MCF 10A (cell line): ENCODE measurements at regions of chr17 and their contacts with region 1.

Region 1: DNA sequence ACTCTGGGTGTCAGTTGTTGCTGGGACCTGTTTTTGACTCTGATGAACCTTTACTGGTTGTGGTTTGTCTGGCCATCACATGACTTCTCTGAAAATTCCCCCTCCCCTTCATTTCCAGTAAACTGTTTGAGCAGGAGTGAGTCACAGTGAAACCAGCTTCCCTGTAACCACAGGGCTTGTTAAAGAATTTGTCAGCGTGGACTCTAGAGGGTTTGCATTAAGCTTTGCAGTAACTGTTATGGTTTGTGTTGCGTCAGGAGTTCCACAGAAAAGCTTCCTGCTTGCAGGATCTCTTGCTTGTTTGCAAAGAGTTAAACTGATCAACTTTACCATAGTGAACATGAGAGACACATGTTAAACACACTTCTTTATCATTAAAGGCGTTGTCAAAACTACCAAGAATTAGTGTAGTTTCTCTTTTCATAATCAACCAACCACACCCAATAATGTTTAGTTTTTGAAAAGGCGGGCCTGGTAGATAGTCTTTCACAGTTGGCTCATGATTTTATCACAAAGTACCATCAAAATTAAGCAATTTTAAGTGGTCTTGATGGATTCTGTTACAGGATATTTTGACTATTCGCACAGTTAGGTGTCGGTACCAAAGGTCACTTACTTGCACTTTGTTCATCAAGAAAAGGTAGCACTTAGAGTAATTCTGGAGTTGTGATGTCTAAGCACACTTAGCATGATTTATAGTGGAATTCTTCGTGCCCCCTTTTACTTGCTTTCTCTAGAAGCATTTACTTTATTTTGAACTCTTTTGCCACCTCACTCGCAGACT is 79.3 kb downstream of the VMP1 start:
- DNase-seq: peak; percentile 99
- H3K4me3 Mint-ChIP-seq: peak overlapping the region; percentile 64
- H3K27ac Mint-ChIP-seq: peak overlapping the region; percentile 93
- H3K4me1 Mint-ChIP-seq: peaks cover 28% of the 10 kb centered on the region
- H3K27me3 Mint-ChIP-seq: no peaks in the 10 kb centered on the region
- CTCF ChIP-seq: no peak

Region 2: DNA sequence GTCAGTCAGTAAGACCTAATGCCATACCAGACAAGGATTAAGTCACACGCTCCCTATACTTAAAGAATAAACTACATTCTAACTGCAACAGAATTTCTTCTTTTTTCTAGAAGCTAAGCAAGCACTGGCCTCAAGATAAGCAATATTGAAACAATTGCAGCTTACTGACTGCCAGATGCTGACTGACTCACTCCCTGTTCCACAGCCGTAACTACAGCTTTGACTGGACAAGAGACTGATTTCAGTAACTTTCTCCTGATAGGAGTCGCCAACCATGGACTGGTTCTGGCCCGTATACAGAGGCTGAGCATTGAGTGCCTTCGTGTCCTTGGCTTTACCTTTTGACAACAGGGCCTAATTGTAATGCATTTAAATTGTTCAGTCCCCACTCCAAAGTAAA is 748.0 kb before region 1 on chr17:
- CTCF ChIA-PET with region 1: no interaction called
- POLR2A ChIA-PET with region 1: no interaction called
- intact Hi-C with region 1: no loop called
- DNase-seq: no peak
- H3K4me3 Mint-ChIP-seq: no peak overlapping the region
- H3K27ac Mint-ChIP-seq: no peak overlapping the region
- H3K4me1 Mint-ChIP-seq: no peaks in the 10 kb centered on the region
- H3K27me3 Mint-ChIP-seq: no peaks in the 10 kb centered on the region
- CTCF ChIP-seq: no peak

Region 3: DNA sequence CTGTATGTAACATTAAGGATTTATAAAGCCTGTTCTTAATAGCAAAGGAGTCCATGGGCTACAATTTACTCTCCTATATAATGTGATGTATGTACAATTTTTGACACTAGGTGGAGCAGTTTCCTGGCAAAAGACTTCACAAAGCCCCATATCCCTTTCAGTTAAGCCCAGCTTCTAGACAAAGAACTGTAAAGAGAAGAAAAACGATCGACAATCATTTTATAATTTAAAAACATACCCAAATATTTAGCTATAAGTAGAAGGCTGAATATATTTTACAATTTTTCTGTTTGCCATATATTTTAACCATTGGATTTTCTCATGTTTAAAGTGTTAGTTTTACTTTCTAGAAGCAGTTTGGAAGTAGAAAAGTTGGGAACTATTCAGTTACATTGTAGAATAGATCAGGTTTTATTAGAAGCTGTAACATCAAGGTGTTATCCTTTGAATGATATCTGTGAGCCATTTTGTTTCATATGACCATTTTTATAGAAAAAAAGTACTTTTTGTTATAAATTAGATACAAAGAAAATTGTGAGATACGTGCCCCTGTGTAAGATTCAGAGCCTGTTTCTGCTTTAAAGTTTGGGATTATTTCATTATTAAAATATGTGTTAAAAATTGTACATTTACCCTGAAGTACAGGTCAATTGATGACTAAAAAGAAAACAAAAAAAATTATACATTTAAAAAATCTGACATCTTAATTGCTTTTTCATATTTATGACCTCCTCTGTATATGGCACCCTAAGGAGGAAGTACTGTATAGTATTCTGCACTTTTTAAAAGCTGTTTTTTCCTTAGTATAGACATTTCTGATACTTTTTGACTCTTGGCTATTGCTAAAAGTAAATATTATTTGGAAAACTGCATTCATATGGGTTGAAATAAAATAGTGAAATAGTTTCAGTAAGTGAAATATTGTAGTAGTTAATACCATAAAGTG is 32.9 kb before region 1 on chr17:
- CTCF ChIA-PET with region 1: interaction called, 23 read pairs
- POLR2A ChIA-PET with region 1: interaction called, 150 read pairs
- intact Hi-C with region 1: loop called (anchors 1 kb)
- DNase-seq: peak; percentile 86
- H3K4me3 Mint-ChIP-seq: peak overlapping the region; percentile 56
- H3K27ac Mint-ChIP-seq: peak overlapping the region; percentile 83
- H3K4me1 Mint-ChIP-seq: peaks cover 23% of the 10 kb centered on the region
- H3K27me3 Mint-ChIP-seq: no peaks in the 10 kb centered on the region
- CTCF ChIP-seq: peak; percentile 62

Region 4: DNA sequence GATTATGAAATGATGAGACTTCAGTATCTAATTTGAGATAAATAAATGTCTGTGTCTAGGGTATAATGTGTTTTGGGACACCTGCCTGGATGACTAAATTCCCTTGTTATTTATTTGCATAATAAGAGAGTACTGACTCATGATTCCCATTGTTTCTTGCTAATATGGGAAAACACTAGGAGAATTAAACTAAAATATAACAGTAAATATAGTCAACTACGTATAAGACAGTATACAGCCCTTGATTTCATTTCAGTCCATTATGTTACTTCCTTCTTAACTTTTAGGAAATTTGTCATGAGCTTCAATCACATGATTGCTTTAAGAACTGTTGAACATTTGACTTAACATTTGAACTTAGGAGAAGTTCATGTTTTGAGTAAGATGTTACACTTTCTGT is 16.8 kb before region 1 on chr17:
- CTCF ChIA-PET with region 1: interaction called, 3 read pairs
- POLR2A ChIA-PET with region 1: interaction called, 150 read pairs
- intact Hi-C with region 1: no loop called
- DNase-seq: peak; percentile 61
- H3K4me3 Mint-ChIP-seq: no peak overlapping the region
- H3K27ac Mint-ChIP-seq: peak overlapping the region; percentile 75
- H3K4me1 Mint-ChIP-seq: no peaks in the 10 kb centered on the region
- H3K27me3 Mint-ChIP-seq: no peaks in the 10 kb centered on the region
- CTCF ChIP-seq: no peak

Region 5: DNA sequence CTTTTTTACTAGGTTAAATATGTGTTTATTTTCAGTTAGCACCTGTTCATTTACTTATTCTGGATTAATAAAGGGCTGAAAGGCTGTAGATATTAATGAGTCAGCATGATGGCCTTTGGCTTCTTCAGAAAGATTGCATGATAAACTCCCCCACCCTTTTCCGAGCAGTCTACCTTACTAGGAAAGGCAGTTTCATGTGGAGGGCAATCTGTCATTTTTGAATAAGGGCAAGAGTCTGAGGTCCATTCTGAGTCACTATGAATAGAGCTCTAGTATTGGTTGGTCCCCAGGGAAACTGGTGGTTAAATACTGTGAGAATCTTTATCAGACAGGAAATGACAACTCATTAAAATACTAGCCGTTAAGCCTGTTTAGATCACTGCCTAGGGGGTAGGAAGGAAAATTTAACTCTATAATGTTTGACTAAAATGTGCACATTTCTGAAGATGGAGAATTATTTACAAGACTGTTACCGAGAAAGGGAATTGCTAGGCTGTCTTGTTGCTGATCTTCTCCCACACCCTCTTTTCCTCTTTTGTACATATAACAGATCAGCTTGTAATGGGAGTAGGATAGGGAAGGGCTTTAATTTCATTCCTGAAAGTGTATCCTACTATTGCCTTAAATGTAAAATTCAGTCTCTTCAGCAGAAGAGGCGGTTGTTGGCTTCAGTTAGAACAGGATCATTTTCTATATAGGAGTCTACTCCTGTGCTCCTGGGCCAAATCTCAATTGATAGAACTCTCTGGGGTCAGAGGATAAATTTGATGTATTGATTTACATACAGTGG is 42.7 kb after region 1 on chr17:
- CTCF ChIA-PET with region 1: interaction called, 7 read pairs
- POLR2A ChIA-PET with region 1: interaction called, 57 read pairs
- intact Hi-C with region 1: loop called (anchors 2 kb)
- DNase-seq: peak; percentile 98
- H3K4me3 Mint-ChIP-seq: peak overlapping the region; percentile 61
- H3K27ac Mint-ChIP-seq: peak overlapping the region; percentile 94
- H3K4me1 Mint-ChIP-seq: peaks cover 24% of the 10 kb centered on the region
- H3K27me3 Mint-ChIP-seq: no peaks in the 10 kb centered on the region
- CTCF ChIP-seq: no peak

Region 6: GRCh38 chr17:59846394-59847165 is 59.9 kb after region 1 on chr17:
- CTCF ChIA-PET with region 1: interaction called, 5 read pairs
- POLR2A ChIA-PET with region 1: interaction called, 720 read pairs
- intact Hi-C with region 1: loop called (anchors 1 kb)
- DNase-seq: peak; percentile 91
- H3K4me3 Mint-ChIP-seq: peak overlapping the region; percentile 50
- H3K27ac Mint-ChIP-seq: peak overlapping the region; percentile 98
- H3K4me1 Mint-ChIP-seq: peaks cover 26% of the 10 kb centered on the region
- H3K27me3 Mint-ChIP-seq: no peaks in the 10 kb centered on the region
- CTCF ChIP-seq: no peak

Region 7: DNA sequence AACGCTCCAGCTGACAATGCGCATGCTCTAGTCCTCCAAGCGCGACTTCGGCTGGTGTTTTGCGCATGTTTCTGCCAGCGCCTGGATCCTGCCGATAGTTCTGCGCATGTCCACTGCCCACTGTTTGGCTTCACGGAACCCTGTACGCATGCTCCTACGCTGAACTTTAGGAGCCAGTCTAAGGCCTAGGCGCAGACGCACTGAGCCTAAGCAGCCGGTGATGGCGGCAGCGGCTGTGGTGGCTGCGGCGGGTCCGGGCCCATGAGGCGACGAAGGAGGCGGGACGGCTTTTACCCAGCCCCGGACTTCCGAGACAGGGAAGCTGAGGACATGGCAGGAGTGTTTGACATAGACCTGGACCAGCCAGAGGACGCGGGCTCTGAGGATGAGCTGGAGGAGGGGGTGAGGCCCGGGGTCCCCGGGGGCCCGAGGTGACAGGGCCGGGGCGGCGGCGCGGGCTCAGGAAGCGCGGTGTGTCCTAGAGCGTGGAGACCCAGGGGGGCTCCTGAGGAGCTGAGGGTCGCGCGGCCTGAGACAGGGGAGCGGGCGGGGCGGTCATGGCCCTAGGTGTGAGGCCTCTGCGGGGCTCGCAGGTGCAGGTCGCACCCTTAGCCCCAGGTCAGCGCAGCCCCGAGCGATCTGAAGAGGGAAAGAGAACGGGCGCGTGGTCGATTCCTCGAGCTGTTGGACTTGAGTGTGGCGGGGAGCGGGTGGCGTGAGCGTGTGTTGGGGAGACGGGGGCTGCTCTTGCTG is 106.4 kb after region 1 on chr17 and contains the starts of genes RPS6KB1 and TUBD1:
- CTCF ChIA-PET with region 1: no interaction called
- POLR2A ChIA-PET with region 1: interaction called, 17 read pairs
- intact Hi-C with region 1: no loop called
- DNase-seq: peak; percentile 98
- H3K4me3 Mint-ChIP-seq: peak within 1 kb of the TSS; percentile 94
- H3K27ac Mint-ChIP-seq: peak within 1 kb of the TSS; percentile 99
- H3K4me1 Mint-ChIP-seq: peaks cover 9% of the 10 kb centered on the region
- H3K27me3 Mint-ChIP-seq: no peaks in the 10 kb centered on the region
- CTCF ChIP-seq: no peak
- total RNA-seq, gene RPS6KB1: 37.4 and 48.4 TPM in 2 replicates
- total RNA-seq, gene TUBD1: 4.4 and 5.2 TPM in 2 replicates